Left lung (tissue), 14 donors: ENCODE measurements at regions of chr20 and their contacts with region 1.

Region 1: DNA sequence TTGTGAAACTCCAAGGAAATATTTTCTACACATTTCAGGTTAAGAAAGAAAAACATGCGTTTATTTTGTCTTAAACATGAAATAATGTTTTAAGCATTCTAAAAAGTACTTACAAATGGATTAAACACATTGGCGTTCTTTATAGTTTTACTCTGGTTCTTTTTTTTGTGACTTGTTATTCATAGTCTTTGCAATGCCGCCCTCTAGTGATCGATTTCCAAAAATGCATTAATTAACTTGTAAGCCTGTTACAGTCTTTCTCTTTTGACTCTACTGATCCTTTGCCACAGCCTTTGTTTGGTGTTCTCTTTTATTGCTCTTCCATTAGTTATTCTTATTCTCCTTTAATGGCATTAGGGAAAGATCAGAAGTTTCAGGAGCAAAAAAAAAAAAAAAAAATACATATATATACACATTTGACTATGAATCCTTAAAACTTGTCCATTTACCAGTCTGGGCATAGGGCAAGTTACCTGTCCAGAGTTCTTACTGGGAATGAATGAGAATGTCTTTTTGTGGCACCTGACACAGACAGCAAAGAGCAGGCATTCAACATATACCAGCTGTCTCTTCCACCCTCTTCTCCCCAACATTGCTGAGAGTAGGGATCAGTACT is 59.9 kb downstream of the MACROD2 start:
- DNase-seq: peak in 2 of 4 donors; percentile 42 to 73
- ATAC-seq: peak; percentile 80
- H3K4me3 ChIP-seq: no peak overlapping the region
- H3K27ac ChIP-seq: no peak overlapping the region
- H3K4me1 ChIP-seq: no peaks in the 10 kb centered on the region
- H3K27me3 ChIP-seq: no peaks in the 10 kb centered on the region
- CTCF ChIP-seq: peak; percentile 43 to 48

Region 2: DNA sequence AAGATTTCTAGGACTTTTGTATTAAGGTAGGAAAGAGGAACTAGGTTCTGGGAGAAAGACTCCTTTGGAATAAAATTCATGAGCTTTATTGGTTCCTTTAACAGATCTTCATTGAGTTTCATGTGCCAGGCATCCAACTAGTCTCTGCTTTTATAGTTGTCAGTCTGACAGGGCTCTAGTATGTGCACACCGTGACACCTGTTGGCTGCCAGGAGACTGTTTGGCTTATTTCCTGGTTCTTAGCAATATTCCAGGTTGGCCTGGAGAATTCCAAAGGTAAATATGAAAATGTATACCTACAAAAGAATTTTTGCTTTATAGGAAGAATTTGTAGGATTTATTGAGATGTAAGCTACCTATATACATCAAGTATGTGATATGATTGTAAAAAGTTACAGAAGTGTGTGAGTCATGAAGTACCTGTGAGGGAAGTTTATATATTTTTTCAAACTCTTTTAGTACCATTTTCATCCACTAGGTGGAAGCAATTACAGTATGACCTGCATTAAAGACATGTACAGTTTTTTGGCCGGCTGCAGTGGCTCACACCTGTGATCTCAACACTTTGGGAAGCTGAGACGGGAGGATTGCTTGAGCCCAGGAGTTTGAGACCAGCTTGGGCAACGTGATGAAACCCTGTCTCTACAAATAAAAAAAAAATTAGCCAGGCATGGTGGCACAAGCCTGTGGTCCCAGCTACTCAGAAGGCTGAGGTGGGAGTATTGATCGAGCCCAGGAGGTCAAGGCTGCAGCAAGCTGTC is 235.2 kb before region 1 on chr20:
- intact Hi-C with region 1: loop called in 1 of 2 experiments (anchors 10 kb)
- DNase-seq: peak in 2 of 4 donors; percentile 10 to 40
- ATAC-seq: peak; percentile 83
- H3K4me3 ChIP-seq: no peak overlapping the region
- H3K27ac ChIP-seq: no peak overlapping the region
- H3K4me1 ChIP-seq: peaks cover 0 to 7% of the 10 kb centered on the region in 2 donors
- H3K27me3 ChIP-seq: no peaks in the 10 kb centered on the region
- CTCF ChIP-seq: peak; percentile 37 to 73

Region 3: GRCh38 chr20:13995081-13995694 is 60.0 kb before region 1 on chr20 and contains the start of gene MACROD2:
- intact Hi-C with region 1: no loop called
- DNase-seq: peak; percentile 40 to 94 (median 90)
- ATAC-seq: peak; percentile 98
- H3K4me3 ChIP-seq: peak within 1 kb of the TSS; percentile 57 to 58
- H3K27ac ChIP-seq: peak within 1 kb of the TSS; percentile 8 to 29
- H3K4me1 ChIP-seq: peaks cover 0 to 5% of the 10 kb centered on the region in 2 donors
- H3K27me3 ChIP-seq: peaks cover 0 to 31% of the 10 kb centered on the region in 2 donors
- CTCF ChIP-seq: no peak
- polyA plus RNA-seq, gene MACROD2: 6.1 to 9.2 (median 8.3) TPM